ENCODE measurements at regions of chr7 and their contacts with region 1.

Region 1: DNA sequence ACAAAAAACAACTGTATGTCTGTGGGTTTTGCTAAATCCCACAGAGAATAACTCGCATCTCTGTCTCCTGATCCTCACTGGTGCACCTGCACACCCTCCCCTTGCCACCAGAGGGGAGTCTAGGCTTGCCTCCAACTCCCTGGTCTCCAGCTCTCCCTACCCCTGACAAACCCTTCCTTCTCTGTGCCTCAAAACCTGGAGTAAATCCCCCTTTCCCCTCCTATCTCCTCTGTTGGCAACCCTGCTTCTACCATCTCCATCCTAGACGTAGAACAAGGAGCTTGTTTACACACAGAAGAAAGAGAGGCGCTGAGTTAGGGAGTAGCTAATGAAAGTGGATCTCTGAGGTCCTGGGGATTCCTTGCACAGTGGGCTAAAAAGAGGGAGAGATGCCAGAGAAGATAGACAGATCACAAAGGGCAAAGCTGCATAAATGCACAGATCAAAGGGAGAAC is 6.0 kb downstream of the MBLAC1 start:
- DNase-seq: peak; percentile 68 to 78 (median 72)
- ATAC-seq: peak; percentile 73
- H3K4me3 ChIP-seq: no peak overlapping the region
- H3K27ac ChIP-seq: no peak overlapping the region
- H3K4me1 ChIP-seq: peaks cover 34% of the 10 kb centered on the region
- H3K27me3 ChIP-seq: no peaks in the 10 kb centered on the region
- CTCF ChIP-seq: peak; percentile 71 to 98 (median 80)
- POLR2A ChIP-seq: no peak

Region 2: DNA sequence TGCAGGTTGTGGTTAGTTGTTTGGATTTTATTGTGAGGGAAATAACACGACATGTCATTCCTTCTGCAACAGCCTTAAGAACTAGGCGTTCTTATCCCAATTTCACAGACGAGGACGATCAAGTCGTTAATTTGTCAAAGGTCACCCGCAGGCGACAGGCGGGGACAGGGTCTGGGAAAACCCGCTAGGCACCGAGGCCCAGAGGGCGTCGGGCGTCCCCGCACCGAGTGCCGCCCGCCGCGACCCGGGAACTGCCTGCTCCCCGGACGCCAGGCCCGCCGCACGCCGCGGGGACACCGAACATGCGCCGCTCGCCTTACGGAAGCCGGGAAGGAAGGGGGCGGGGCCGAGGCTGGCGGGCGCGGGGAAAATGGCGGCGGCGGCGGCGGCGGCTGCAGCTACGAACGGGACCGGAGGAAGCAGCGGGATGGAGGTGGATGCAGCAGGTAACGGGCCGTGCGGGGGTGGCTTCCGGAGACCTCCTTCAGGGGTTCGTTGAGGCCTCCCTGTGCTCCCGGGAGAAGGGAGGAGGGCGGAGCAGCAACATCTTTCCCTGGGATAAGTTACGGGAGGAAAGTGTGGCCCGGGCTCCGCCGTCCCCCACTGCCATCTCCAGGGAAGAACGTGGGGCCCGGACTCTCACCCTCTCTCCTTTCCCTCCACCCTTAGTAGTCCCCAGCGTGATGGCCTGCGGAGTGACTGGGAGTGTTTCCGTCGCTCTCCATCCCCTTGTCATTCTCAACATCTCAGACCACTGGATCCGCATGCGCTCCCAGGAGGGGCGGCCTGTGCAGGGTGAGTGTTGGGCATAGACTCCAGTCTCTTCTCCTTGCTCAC is 43.9 kb before region 1 on chr7 and contains the start of gene COPS6:
- intact Hi-C with region 1: no loop called
- DNase-seq: peak; percentile 81 to 87 (median 83)
- ATAC-seq: peak; percentile 91
- H3K4me3 ChIP-seq: peak within 1 kb of the TSS; percentile 76 to 93
- H3K27ac ChIP-seq: peak within 1 kb of the TSS; percentile 69 to 90 (median 78)
- H3K4me1 ChIP-seq: peaks cover 21% of the 10 kb centered on the region
- H3K27me3 ChIP-seq: no peaks in the 10 kb centered on the region
- CTCF ChIP-seq: peak in 1 of 7 experiments; percentile 16
- POLR2A ChIP-seq: peak; percentile 34 to 84 (median 79)
- total RNA-seq, gene COPS6: 15.8 to 16.1 TPM

Region 3: GRCh38 chr7:100215895-100216294 is 83.2 kb after region 1 on chr7:
- intact Hi-C with region 1: loop called (anchors 10 kb)
- DNase-seq: peak in 3 of 4 donors; percentile 36 to 58 (median 57)
- ATAC-seq: peak; percentile 38
- H3K4me3 ChIP-seq: no peak overlapping the region
- H3K27ac ChIP-seq: no peak overlapping the region
- H3K4me1 ChIP-seq: peaks cover 4% of the 10 kb centered on the region
- H3K27me3 ChIP-seq: no peaks in the 10 kb centered on the region
- CTCF ChIP-seq: no peak
- POLR2A ChIP-seq: no peak

Region 4: DNA sequence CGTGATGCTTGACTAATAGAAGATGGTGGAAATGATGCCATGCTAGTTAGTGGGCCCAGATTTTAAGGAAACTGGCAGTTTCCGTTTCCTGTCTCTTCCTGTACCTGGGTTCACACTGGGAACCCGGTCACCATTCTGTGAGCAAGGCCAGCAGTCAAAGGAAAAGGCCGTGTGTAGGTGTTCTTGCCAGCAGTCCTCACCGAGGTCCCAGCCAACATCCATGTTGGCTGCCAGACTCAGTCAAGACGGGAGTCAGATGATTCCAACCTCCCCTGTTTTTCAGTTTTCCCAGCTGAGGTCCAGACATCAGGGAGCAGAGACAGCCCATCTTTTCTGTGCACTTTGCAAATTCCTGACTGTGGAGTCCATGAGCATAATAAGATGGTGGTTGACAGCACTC is 210.0 kb after region 1 on chr7:
- intact Hi-C with region 1: loop called (anchors 10 kb)
- DNase-seq: no peak
- ATAC-seq: no peak
- H3K4me3 ChIP-seq: no peak overlapping the region
- H3K27ac ChIP-seq: no peak overlapping the region
- H3K4me1 ChIP-seq: peaks cover 11% of the 10 kb centered on the region
- H3K27me3 ChIP-seq: no peaks in the 10 kb centered on the region
- CTCF ChIP-seq: no peak
- POLR2A ChIP-seq: no peak